K562 (cell line): ENCODE measurements at regions of chr19 and their contacts with region 1.

Region 1: DNA sequence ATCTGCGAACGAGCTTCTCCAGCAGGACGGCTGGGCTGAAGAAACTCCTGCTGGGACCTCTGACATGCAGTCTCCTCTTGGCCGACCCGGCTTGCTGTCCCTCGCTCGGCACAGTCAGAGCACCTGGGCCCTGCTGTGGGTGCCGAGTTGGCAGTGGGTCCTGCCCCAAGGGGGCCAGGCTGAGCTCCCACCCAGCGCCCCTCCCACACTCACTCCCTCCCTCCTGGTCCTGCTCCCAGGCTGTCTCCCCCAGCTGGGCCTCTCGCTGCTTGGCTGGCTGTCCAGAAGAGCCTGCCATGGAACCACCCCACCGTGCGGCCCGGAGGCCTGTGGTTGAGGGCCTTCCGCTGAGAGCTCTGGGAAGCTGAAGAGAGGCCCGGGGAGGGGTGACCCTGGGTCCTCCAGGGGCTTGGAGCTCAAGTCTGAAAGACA is 6.0 kb downstream of the AKT2 start:
- DNase-seq: no peak
- ATAC-seq: no peak
- H3K4me3 ChIP-seq: no peak overlapping the region
- H3K27ac ChIP-seq: no peak overlapping the region
- H3K4me1 ChIP-seq: peaks cover 65 to 71% of the 10 kb centered on the region in 2 experiments
- H3K27me3 ChIP-seq: no peaks in the 10 kb centered on the region
- CTCF ChIP-seq: no peak
- EP300 ChIP-seq: no peak
- POLR2A ChIP-seq: no peak
- RAD21 ChIP-seq: no peak

Region 2: DNA sequence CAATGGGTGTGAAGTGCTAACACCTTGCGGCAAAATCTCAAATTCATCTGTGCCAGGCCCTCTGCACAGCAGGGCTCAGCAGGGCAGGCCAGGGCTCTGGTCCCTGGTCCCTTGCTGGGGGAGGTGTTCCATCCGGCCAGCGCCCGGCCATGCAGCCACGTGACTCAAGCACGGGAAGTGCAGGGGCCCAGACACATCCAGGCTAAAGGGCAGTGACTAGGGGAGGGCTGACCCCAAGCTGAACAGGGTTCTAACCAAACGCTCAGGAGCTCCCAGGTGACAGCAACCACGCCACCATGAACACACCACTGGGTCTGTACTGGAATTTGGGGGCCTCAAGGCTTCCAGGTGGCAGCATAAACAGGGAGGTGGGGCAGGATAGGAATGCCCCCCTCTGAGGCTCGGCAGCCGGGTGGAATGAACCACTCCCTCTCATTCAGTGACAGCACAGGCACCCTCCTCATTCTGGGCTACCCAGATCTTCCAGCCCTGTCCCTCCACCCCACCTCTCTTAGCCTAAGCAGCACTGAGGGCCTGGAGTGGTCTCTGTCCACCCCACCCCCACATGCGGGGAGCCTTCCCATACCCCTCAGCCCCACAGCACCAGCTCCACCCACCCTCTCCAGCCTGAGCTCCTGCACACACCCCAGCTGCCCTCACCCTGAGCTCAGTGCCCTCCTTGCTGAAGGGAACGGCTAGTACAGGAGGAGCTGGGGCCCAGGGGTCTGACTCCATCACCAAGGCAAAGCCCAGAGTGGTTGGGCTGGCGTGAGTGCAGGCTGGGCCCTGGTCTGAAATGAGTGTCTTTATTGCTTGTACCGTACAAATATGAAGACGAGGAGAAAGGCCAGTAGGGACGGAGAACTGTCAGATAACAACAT is 47.4 kb before region 1 on chr19:
- CTCF ChIA-PET with region 1: no interaction called
- POLR2A ChIA-PET with region 1: interaction called, 6 read pairs
- in situ Hi-C with region 1: no loop called
- intact Hi-C with region 1: loop called (anchors 5 kb)
- DNase-seq: peak; percentile 75 to 88 (median 78)
- ATAC-seq: peak; percentile 90
- H3K4me3 ChIP-seq: no peak overlapping the region; the same call in 1 of the 2 replicates
- H3K27ac ChIP-seq: peak overlapping the region; percentile 70
- H3K4me1 ChIP-seq: peaks cover 25 to 53% of the 10 kb centered on the region in 2 experiments
- H3K27me3 ChIP-seq: no peaks in the 10 kb centered on the region
- CTCF ChIP-seq: no peak
- EP300 ChIP-seq: no peak
- POLR2A ChIP-seq: peak; percentile 64
- RAD21 ChIP-seq: no peak